Naive thymus-derived CD4-positive, alpha-beta T cell (primary cell): ENCODE measurements at regions of chr3 and their contacts with region 1.

Region 1: GRCh38 chr3:39051647-39052561 is at the starts of genes SCN11A and WDR48:
- DNase-seq: peak; percentile 78 to 95 (median 90)
- ATAC-seq: peak; percentile 93
- H3K4me3 ChIP-seq: peak within 1 kb of the TSS; percentile 80
- H3K4me3 Mint-ChIP-seq: peak within 1 kb of the TSS; percentile 91 to 99 (median 99)
- H3K27ac ChIP-seq: peak within 1 kb of the TSS; percentile 98
- H3K27ac Mint-ChIP-seq: peak within 1 kb of the TSS; percentile 95 to 100 (median 99)
- H3K4me1 ChIP-seq: peaks cover 7 to 16% of the 10 kb centered on the region in 2 donors
- H3K4me1 Mint-ChIP-seq: peaks cover 32 to 81% (median 77%) of the 10 kb centered on the region in 7 donors
- H3K27me3 ChIP-seq: no peaks in the 10 kb centered on the region
- H3K27me3 Mint-ChIP-seq: no peaks in the 10 kb centered on the region
- total RNA-seq, gene SCN11A: 0.07 to 0.32 (median 0.19) TPM
- total RNA-seq, gene WDR48: 46.7 to 97.7 (median 68.0) TPM

Region 2: DNA sequence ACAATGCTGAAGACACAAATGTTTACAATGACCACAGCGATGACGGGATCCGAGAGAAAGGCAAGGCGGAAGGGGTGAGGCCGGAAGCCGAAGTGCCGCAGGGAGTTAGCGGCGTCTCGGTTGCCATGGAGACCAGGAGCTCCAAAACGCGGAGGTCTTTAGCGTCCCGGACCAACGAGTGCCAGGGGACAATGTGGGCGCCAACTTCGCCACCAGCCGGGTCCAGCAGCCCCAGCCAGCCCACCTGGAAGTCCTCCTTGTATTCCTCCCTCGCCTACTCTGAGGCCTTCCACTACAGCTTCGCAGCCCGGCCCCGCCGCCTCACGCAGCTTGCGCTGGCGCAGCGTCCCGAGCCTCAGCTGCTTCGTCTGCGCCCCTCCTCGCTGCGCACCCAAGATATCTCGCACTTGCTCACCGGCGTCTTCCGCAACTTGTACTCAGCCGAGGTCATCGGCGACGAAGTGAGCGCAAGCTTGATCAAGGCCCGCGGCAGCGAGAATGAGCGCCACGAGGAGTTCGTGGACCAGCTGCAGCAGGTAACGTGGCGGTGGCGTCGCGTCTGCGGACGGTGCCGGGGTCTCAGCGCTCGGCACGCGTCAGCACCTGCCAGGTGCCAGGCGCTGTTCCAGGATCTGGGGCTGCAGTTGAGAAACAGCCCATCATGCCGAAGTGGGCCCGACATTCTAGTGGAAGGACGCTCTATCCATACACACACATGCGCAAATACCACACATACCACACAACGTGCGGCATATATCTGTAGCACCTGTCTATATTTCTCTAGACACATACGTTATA is 1012.6 kb before region 1 on chr3 and contains the start of gene DLEC1:
- CTCF ChIA-PET with region 1: no interaction called
- POLR2A ChIA-PET with region 1: no interaction called
- intact Hi-C with region 1: loop called in 1 of 2 experiments (anchors 5 kb)
- DNase-seq: peak; percentile 56 to 86 (median 83)
- ATAC-seq: peak; percentile 72
- H3K4me3 ChIP-seq: peak within 1 kb of the TSS; percentile 62
- H3K4me3 Mint-ChIP-seq: peak within 1 kb of the TSS; percentile 71 to 92 (median 88)
- H3K27ac ChIP-seq: peak within 1 kb of the TSS; percentile 62
- H3K27ac Mint-ChIP-seq: peak within 1 kb of the TSS; percentile 89 to 97 (median 92)
- H3K4me1 ChIP-seq: peaks cover 8 to 26% of the 10 kb centered on the region in 2 donors
- H3K4me1 Mint-ChIP-seq: peaks cover 20 to 37% (median 32%) of the 10 kb centered on the region in 7 donors
- H3K27me3 ChIP-seq: no peaks in the 10 kb centered on the region
- H3K27me3 Mint-ChIP-seq: peaks cover 0 to 7% (median 0%) of the 10 kb centered on the region in 5 donors
- total RNA-seq, gene DLEC1: 1.5 to 9.4 (median 7.5) TPM

Region 3: GRCh38 chr3:39025222-39025970 is 26.5 kb before region 1 on chr3:
- CTCF ChIA-PET with region 1: interaction called, 3 read pairs
- POLR2A ChIA-PET with region 1: no interaction called
- intact Hi-C with region 1: loop called in 1 of 2 experiments (anchors 2 kb)
- DNase-seq: no peak
- ATAC-seq: no peak
- H3K4me3 ChIP-seq: no peak overlapping the region
- H3K4me3 Mint-ChIP-seq: no peak overlapping the region
- H3K27ac ChIP-seq: no peak overlapping the region
- H3K27ac Mint-ChIP-seq: no peak overlapping the region
- H3K4me1 ChIP-seq: no peaks in the 10 kb centered on the region
- H3K4me1 Mint-ChIP-seq: peaks cover 0 to 9% (median 0%) of the 10 kb centered on the region in 7 donors
- H3K27me3 ChIP-seq: no peaks in the 10 kb centered on the region
- H3K27me3 Mint-ChIP-seq: peaks cover 5 to 25% (median 11%) of the 10 kb centered on the region in 5 donors

Region 4: GRCh38 chr3:39180546-39181346 is 128.8 kb after region 1 on chr3:
- CTCF ChIA-PET with region 1: no interaction called
- POLR2A ChIA-PET with region 1: interaction called, 3 read pairs
- intact Hi-C with region 1: loop called (anchors 1 to 2 kb)
- DNase-seq: peak; percentile 80 to 86 (median 83)
- ATAC-seq: peak; percentile 94
- H3K4me3 ChIP-seq: peak overlapping the region; percentile 74
- H3K4me3 Mint-ChIP-seq: peak overlapping the region; percentile 79 to 94 (median 87)
- H3K27ac ChIP-seq: peak overlapping the region; percentile 68
- H3K27ac Mint-ChIP-seq: peak overlapping the region; percentile 71 to 94 (median 88)
- H3K4me1 ChIP-seq: peaks cover 23 to 33% of the 10 kb centered on the region in 2 donors
- H3K4me1 Mint-ChIP-seq: peaks cover 24 to 51% (median 38%) of the 10 kb centered on the region in 7 donors
- H3K27me3 ChIP-seq: no peaks in the 10 kb centered on the region
- H3K27me3 Mint-ChIP-seq: no peaks in the 10 kb centered on the region

Region 5: DNA sequence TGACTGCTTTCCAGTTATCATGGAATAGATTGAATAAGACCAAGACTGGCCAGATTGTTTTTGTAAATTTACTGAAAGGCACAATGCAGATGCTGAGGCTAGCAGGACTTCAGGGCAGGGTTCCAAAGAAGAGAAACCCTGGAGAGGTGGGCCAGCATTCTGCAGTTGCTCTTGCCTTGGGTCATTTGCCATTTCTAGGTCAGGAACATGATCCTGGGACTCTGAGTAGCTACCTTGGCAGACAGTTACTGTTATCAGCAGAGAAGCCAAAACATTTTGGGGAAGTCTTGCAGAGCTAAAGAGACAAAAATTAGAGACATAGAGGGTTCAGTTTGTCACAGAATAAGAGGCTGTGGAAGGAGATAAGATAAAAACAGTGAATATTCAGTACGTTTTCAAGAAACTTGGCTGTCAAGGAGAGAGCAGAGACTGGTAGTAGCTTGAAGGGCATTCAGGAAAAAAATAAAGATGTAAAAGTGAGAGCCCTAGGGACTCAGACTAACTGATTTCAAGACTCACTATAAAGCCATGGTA is 710.7 kb after region 1 on chr3:
- CTCF ChIA-PET with region 1: no interaction called
- POLR2A ChIA-PET with region 1: no interaction called
- intact Hi-C with region 1: no loop called
- DNase-seq: no peak
- ATAC-seq: no peak
- H3K4me3 ChIP-seq: no peak overlapping the region
- H3K4me3 Mint-ChIP-seq: no peak overlapping the region
- H3K27ac ChIP-seq: no peak overlapping the region
- H3K27ac Mint-ChIP-seq: no peak overlapping the region
- H3K4me1 ChIP-seq: no peaks in the 10 kb centered on the region
- H3K4me1 Mint-ChIP-seq: no peaks in the 10 kb centered on the region
- H3K27me3 ChIP-seq: no peaks in the 10 kb centered on the region
- H3K27me3 Mint-ChIP-seq: peaks cover 0 to 11% (median 10%) of the 10 kb centered on the region in 5 donors

Region 6: GRCh38 chr3:40309418-40309924 is 1257.6 kb after region 1 on chr3 and contains the start of gene EIF1B:
- CTCF ChIA-PET with region 1: no interaction called
- POLR2A ChIA-PET with region 1: no interaction called
- intact Hi-C with region 1: loop called in 1 of 2 experiments (anchors 1 kb)
- DNase-seq: peak; percentile 95 to 99 (median 98)
- ATAC-seq: peak; percentile 97
- H3K4me3 ChIP-seq: peak within 1 kb of the TSS; percentile 80
- H3K4me3 Mint-ChIP-seq: peak within 1 kb of the TSS; percentile 92 to 100 (median 99)
- H3K27ac ChIP-seq: peak within 1 kb of the TSS; percentile 99
- H3K27ac Mint-ChIP-seq: peak within 1 kb of the TSS; percentile 97 to 100 (median 99)
- H3K4me1 ChIP-seq: peaks cover 5 to 16% of the 10 kb centered on the region in 2 donors
- H3K4me1 Mint-ChIP-seq: peaks cover 5 to 44% (median 30%) of the 10 kb centered on the region in 7 donors
- H3K27me3 ChIP-seq: no peaks in the 10 kb centered on the region
- H3K27me3 Mint-ChIP-seq: no peaks in the 10 kb centered on the region
- total RNA-seq, gene EIF1B: 34.5 to 82.0 (median 53.3) TPM